ENCODE measurements at regions of chr17 and their contacts with region 1.

Region 1: GRCh38 chr17:1947229-1947742 is 77.8 kb downstream of the RTN4RL1 start:
- DNase-seq: no peak
- H3K4me3 ChIP-seq: no peak overlapping the region
- H3K27ac ChIP-seq: no peak overlapping the region
- H3K27me3 ChIP-seq: peaks cover 12% of the 10 kb centered on the region
- CTCF ChIP-seq: no peak

Region 2: GRCh38 chr17:1839516-1839915 is 107.8 kb before region 1 on chr17:
- CTCF ChIA-PET with region 1: no interaction called
- POLR2A ChIA-PET with region 1: no interaction called
- DNase-seq: no peak
- H3K4me3 ChIP-seq: no peak overlapping the region
- H3K27ac ChIP-seq: no peak overlapping the region
- H3K27me3 ChIP-seq: no peaks in the 10 kb centered on the region
- CTCF ChIP-seq: no peak

Region 3: DNA sequence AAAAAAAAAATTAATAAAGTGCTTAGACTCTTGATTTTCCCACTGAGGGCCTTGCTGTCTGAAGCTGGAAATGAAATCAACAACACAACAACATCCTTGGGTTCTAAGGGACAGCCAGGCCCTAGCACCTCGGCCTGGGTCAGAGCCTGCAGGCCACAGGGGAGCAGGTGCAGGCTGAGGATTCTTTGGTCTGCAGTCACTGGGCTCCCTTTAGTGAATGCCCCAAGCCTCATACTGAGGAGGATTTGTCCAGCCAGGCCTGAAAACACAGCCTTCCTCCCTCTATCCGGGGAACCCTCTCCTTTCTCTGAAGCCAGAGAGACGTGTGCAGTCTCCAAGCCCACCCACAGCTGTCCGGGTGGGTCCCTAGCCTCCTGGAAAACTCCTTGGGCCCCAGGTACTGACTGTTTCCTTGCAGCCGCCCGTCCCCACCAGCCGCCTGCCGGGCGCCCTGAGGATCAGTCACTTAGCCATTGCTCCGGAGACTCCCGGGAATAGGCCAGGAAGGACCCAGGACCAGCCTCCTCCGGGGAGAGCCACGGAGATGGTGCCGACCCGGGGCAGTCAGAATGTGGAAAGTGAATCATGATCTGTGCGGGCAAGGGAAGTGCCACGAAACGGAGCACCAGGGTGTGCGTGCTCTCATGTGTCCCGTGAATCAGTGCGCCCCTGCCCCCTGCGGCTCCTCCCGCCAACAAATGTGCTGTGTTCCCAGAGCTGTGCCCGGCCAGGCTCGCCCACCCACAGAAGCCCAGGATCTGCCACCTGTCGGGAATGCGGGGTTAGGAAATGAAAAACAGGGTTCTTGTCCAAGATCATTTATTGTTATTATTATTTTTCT is 13.2 kb before region 1 on chr17:
- CTCF ChIA-PET with region 1: no interaction called
- POLR2A ChIA-PET with region 1: no interaction called
- DNase-seq: no peak
- H3K4me3 ChIP-seq: no peak overlapping the region
- H3K27ac ChIP-seq: no peak overlapping the region
- H3K27me3 ChIP-seq: peaks cover 36% of the 10 kb centered on the region
- CTCF ChIP-seq: no peak

Region 4: GRCh38 chr17:2044263-2044894 is 97.1 kb after region 1 on chr17:
- CTCF ChIA-PET with region 1: no interaction called
- POLR2A ChIA-PET with region 1: interaction called, 12 read pairs
- DNase-seq: no peak
- H3K4me3 ChIP-seq: no peak overlapping the region
- H3K27ac ChIP-seq: peak overlapping the region; percentile 65
- H3K27me3 ChIP-seq: no peaks in the 10 kb centered on the region
- CTCF ChIP-seq: no peak